Left colon (tissue), 2 donors: ENCODE measurements at regions of chr5 and their contacts with region 1.

Region 1: GRCh38 chr5:126370796-126371718 is 52.2 kb upstream of the GRAMD2B start:
- DNase-seq: peak; percentile 58 to 62
- ATAC-seq: peak; percentile 80

Region 2: DNA sequence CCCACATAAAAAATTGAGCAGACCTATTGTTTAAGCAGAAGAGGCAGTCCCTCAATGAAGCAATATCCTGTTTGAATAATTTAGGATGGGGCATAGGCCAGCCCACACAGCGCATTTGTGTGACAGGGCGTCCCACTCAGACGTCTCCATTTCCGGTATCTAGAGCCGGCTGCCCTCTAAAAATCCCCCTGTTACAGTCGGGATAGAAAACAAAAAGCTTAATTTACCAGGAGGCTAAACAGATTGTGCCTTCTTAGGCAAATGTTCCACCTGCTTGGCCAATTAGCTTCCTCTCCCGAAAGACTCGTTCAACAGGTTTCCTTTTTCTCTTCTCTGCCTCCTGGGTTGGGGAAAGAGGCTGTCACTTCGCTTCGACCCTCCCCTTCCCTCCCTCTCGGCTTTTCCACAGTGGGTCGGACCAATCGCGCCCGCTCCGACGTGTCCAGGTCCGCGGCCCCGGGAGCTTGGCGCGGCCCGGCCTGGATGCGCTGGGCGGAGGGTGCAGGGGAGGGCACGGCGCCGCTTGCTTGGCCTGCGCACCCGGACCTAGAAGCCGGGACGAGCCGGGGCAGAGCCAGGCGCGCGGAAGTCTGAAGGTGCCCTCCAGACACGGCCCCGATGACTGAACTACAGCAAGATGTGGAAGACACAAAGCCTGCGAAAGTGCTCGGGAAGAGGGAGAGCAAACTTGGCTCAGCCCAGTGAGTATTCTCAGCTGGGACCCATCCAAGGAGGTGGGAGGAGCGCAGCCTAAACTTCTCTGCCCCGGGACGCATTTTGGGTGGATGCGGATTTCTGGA is 52.1 kb after region 1 on chr5 and contains the start of gene GRAMD2B:
- intact Hi-C with region 1: loop called in 1 of 2 experiments (anchors 5 kb)
- DNase-seq: peak; percentile 83 to 88
- ATAC-seq: peak; percentile 97
- total RNA-seq, gene GRAMD2B: 49.8 to 52.2 TPM

Region 3: DNA sequence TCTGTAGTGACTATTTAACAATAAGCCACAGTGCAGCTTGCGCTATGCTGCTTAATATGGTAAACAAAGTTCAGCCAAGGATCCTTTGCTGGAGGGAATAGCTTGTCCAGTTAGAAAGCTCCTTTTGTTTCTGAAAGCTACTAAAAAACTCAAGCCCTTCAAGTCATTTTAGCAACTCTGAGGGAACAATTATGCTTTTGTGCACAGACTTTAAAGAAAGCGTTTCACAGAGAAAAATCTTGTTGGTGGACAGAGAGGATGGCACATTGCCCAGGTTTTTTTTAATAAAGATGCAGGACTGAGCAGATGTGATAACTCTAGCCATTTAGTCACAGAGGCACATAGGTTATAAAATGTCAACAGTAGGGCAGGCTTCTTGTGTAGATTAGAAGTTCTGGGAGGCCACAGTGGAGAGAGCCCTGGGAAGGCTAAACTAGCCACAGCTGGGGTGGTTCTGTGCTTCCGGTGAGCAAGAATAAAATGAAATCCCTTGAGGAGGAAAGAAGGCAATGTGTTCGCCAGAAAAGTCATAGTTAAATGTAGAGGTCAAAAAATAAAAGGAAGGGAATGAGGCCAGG is 160.6 kb after region 1 on chr5:
- intact Hi-C with region 1: loop called in 1 of 2 experiments (anchors 10 kb)
- DNase-seq: no peak
- ATAC-seq: peak; percentile 40